ENCODE measurements at regions of chr6 and their contacts with region 1.

Region 1: GRCh38 chr6:143510991-143511891 is at the start of gene FUCA2:
- DNase-seq: peak; percentile 64 to 76 (median 70)
- H3K4me3 ChIP-seq: peak within 1 kb of the TSS; percentile 64 to 78
- H3K4me3 Mint-ChIP-seq: peak within 1 kb of the TSS; percentile 91 to 97 (median 92)
- H3K27ac ChIP-seq: peak within 1 kb of the TSS; percentile 67
- H3K27ac Mint-ChIP-seq: peak within 1 kb of the TSS; percentile 92 to 97 (median 94)
- H3K4me1 ChIP-seq: peaks cover 35% of the 10 kb centered on the region
- H3K4me1 Mint-ChIP-seq: peaks cover 20 to 45% (median 27%) of the 10 kb centered on the region in 4 donors
- H3K27me3 ChIP-seq: no peaks in the 10 kb centered on the region
- H3K27me3 Mint-ChIP-seq: no peaks in the 10 kb centered on the region
- total RNA-seq, gene FUCA2: 10.6 to 11.4 TPM

Region 2: DNA sequence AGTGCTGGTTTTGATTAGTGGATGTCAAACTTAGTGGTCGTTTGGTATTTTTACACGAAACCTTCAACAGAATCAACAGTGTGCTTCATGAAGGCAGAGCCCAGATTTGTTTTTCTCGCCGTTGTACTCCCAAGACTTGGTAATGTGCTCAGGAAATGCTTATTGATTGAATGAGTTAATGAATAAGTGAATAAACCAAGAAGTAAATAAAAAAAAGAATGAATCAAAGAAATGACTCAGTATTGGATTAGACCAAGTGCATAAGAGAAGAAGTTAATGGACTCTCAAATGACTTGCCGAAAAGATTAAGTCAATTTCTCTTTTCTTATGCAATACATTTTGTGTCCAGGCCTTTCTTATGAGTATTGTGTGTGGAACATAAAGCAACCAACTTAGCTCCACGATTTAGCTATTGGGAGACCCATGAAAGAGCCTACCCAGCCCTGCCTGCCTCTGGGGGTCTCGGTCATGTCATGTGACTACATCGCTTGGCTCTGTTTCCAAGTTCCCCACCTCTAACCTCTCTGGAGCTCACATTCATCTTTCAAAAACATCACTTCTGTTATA is 10.9 kb after region 1 on chr6:
- CTCF ChIA-PET with region 1: interaction called, 16 read pairs
- POLR2A ChIA-PET with region 1: no interaction called
- intact Hi-C with region 1: no loop called
- DNase-seq: no peak
- H3K4me3 ChIP-seq: no peak overlapping the region
- H3K4me3 Mint-ChIP-seq: no peak overlapping the region
- H3K27ac ChIP-seq: no peak overlapping the region
- H3K27ac Mint-ChIP-seq: peak overlapping the region in 1 of 7 donors; percentile 90
- H3K4me1 ChIP-seq: no peaks in the 10 kb centered on the region
- H3K4me1 Mint-ChIP-seq: peaks cover 0 to 7% (median 5%) of the 10 kb centered on the region in 4 donors
- H3K27me3 ChIP-seq: no peaks in the 10 kb centered on the region
- H3K27me3 Mint-ChIP-seq: no peaks in the 10 kb centered on the region

Region 3: GRCh38 chr6:143569040-143569439 is 57.8 kb after region 1 on chr6:
- CTCF ChIA-PET with region 1: interaction called, 40 read pairs
- POLR2A ChIA-PET with region 1: interaction called, 4 read pairs
- intact Hi-C with region 1: loop called (anchors 2 kb)
- DNase-seq: peak in 1 of 5 donors; percentile 41
- H3K4me3 ChIP-seq: no peak overlapping the region
- H3K4me3 Mint-ChIP-seq: no peak overlapping the region
- H3K27ac ChIP-seq: no peak overlapping the region
- H3K27ac Mint-ChIP-seq: peak overlapping the region; percentile 7 to 74 (median 40)
- H3K4me1 ChIP-seq: peaks cover 22% of the 10 kb centered on the region
- H3K4me1 Mint-ChIP-seq: peaks cover 29 to 60% (median 38%) of the 10 kb centered on the region in 4 donors
- H3K27me3 ChIP-seq: no peaks in the 10 kb centered on the region
- H3K27me3 Mint-ChIP-seq: no peaks in the 10 kb centered on the region

Region 4: DNA sequence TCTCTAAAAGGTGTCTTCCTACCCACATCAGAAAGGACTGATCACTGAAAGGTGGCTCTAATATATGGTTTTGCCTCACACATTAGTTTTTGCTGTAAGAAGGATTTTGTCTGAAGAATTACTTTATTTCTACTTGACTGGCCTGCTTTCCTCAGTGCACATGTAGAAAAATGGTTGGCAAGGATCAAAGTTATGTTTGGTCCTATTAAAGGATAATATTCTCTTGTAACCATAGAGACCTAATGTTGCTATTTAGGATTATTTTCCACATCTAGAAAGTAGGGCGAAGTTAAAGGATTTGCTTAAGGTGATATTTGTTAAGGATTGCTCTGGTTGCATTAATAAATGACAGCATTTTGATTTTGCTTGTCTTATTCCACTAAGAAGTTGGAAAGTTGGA is 207.2 kb after region 1 on chr6:
- CTCF ChIA-PET with region 1: no interaction called
- POLR2A ChIA-PET with region 1: no interaction called
- intact Hi-C with region 1: no loop called
- DNase-seq: no peak
- H3K4me3 ChIP-seq: no peak overlapping the region
- H3K4me3 Mint-ChIP-seq: no peak overlapping the region
- H3K27ac ChIP-seq: no peak overlapping the region
- H3K27ac Mint-ChIP-seq: peak overlapping the region in 2 of 7 donors; percentile 3 to 36
- H3K4me1 ChIP-seq: no peaks in the 10 kb centered on the region
- H3K4me1 Mint-ChIP-seq: peaks cover 0 to 23% (median 11%) of the 10 kb centered on the region in 4 donors
- H3K27me3 ChIP-seq: no peaks in the 10 kb centered on the region
- H3K27me3 Mint-ChIP-seq: no peaks in the 10 kb centered on the region

Region 5: GRCh38 chr6:143842902-143843676 is 331.8 kb after region 1 on chr6 and contains the start of gene LTV1:
- CTCF ChIA-PET with region 1: interaction called, 8 read pairs
- POLR2A ChIA-PET with region 1: interaction called, 10 read pairs
- intact Hi-C with region 1: loop called (anchors 2 kb)
- DNase-seq: peak; percentile 89 to 92 (median 90)
- H3K4me3 ChIP-seq: peak within 1 kb of the TSS; percentile 54 to 90
- H3K4me3 Mint-ChIP-seq: peak within 1 kb of the TSS; percentile 93 to 97 (median 95)
- H3K27ac ChIP-seq: peak within 1 kb of the TSS; percentile 92
- H3K27ac Mint-ChIP-seq: peak within 1 kb of the TSS; percentile 96 to 99 (median 98)
- H3K4me1 ChIP-seq: peaks cover 15% of the 10 kb centered on the region
- H3K4me1 Mint-ChIP-seq: peaks cover 19 to 32% (median 25%) of the 10 kb centered on the region in 4 donors
- H3K27me3 ChIP-seq: no peaks in the 10 kb centered on the region
- H3K27me3 Mint-ChIP-seq: no peaks in the 10 kb centered on the region
- total RNA-seq, gene LTV1: 19.9 to 20.8 TPM